IMR-90 (cell line): ENCODE measurements at regions of chr16 and their contacts with region 1.

Region 1: DNA sequence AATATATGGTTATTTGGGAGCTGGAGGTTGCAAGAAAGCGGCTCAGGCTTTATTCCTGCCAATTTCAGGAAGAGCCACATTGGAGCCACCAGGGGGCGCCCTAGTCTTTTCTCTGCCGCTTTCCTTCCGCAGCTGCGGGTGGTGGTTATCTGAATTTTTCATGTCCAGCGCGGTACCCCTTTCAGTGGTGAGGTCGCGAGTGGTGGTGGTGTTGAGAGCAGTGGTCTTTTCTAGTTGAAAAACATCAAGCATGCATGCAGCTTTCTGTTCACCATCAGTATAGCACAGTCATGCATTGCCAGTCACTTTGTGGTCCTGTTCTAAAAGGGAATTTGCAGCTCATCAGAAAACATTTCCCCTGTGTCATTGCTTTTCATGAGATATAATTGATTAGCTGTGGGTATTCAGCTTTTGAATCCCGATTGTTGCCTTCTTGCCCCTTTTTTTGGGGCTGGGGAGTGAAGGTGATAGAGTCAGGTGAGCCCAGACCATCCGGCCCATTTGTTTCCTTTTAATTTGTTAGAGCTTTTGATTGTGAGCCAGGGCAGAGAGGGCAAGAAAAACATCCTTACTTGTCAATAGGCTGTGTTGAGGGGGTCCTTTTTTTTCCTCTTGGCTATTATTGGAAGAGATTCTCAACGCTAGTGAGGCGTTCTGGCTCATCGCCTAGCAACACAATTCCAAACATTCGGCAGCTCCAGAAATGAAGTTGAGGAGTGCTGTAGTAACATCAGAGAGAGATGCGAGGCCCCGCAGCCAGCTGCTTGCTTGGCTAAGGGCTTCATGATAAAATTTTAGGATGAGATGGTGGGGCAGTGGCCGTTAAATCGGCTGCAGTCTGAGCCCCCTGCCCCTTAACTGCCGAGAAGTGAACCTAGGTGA is 119.0 kb downstream of the SNX29 start:
- DNase-seq: peak; percentile 62
- ATAC-seq: peak; percentile 28
- H3K4me3 ChIP-seq: no peak overlapping the region
- H3K27ac ChIP-seq: no peak overlapping the region
- H3K4me1 ChIP-seq: peaks cover 29% of the 10 kb centered on the region
- H3K27me3 ChIP-seq: no peaks in the 10 kb centered on the region
- CTCF ChIP-seq: peak; percentile 86
- POLR2A ChIP-seq: no peak
- RAD21 ChIP-seq: peak; percentile 86

Region 2: DNA sequence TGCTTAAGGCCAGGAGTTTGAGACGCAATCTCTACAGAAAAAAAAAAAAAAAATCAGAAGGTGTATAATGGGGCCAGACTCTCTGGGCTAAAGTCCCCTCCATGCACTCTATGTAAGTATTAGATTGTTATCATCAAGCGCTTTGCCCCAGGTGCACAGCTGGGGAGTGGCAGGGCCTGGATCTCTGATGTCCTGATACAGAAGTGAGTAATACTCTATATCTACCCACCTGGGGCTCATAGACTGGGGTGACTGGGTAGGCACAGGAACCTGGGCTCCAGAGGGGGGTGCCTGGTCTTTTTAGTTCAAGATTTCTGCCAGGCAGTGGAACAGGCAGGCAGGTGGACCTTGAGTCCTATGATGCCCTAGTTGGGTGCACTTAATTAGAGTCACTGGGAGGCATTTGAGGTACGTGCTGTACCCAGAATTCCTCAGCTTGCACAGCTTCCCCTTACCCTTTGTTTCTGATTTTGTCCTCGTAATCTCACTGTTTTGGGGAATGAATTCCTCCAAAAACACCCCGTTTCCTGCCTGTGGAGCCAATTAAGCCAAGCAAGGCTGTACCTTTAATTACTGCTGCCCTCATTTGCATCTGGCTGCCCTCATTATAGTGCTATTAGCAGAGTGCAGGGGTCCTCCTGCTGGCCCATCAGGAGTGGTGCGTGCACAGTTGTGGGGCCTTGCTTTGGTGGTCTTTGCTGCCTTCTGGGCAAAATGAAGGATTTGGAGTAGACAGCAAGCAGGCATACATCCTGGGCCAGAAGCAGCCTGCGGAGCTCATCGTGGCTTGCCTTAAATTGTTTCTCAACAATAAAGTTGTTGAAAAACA is 120.0 kb after region 1 on chr16:
- CTCF ChIA-PET with region 1: no interaction called
- POLR2A ChIA-PET with region 1: no interaction called
- dilution Hi-C with region 1: no loop called
- in situ Hi-C with region 1: no loop called
- intact Hi-C with region 1: loop called (anchors 1 kb)
- DNase-seq: no peak
- ATAC-seq: no peak
- H3K4me3 ChIP-seq: no peak overlapping the region
- H3K27ac ChIP-seq: no peak overlapping the region
- H3K4me1 ChIP-seq: no peaks in the 10 kb centered on the region
- H3K27me3 ChIP-seq: no peaks in the 10 kb centered on the region
- CTCF ChIP-seq: peak; percentile 38
- POLR2A ChIP-seq: no peak
- RAD21 ChIP-seq: peak; percentile 50

Region 3: DNA sequence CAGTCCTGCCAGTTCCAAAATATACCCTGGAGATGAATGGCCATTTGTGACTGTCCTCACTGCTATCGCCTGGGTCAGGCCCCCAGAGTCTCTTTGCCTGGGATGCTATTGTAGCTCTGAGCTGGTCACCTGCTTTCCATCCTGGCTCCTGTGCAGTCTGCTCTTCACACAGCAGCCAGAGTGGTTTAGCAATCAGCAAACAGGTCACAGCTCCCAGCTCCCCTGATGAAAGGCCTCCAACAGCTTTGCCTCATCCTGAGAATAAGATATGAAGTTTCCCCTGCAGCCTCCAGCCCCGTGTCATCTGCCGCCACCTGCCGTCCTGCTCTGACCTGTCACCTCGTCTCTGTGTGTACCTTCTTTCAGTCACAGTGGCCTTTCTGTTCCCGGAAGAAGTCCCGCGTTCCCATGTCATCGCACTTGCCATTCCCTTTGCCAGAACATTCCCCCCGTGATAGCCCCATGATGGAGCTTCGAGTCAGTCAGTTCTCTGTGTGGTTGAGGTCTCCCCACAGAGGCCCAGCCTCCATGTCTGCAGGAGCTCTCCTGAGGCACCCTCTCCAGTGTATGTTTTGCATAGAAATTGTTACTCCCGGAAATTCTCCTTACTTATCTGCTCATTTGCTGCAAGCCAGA is 162.5 kb after region 1 on chr16:
- CTCF ChIA-PET with region 1: interaction called, 12 read pairs
- POLR2A ChIA-PET with region 1: no interaction called
- dilution Hi-C with region 1: no loop called
- in situ Hi-C with region 1: loop called (anchors 10 kb)
- intact Hi-C with region 1: loop called (anchors 1 kb)
- DNase-seq: no peak
- ATAC-seq: no peak
- H3K4me3 ChIP-seq: no peak overlapping the region
- H3K27ac ChIP-seq: no peak overlapping the region
- H3K4me1 ChIP-seq: peaks cover 11% of the 10 kb centered on the region
- H3K27me3 ChIP-seq: no peaks in the 10 kb centered on the region
- CTCF ChIP-seq: 0 out of 2 replicates have a peak, but pooled peaks have one; percentile 6
- POLR2A ChIP-seq: no peak
- RAD21 ChIP-seq: no peak

Region 4: DNA sequence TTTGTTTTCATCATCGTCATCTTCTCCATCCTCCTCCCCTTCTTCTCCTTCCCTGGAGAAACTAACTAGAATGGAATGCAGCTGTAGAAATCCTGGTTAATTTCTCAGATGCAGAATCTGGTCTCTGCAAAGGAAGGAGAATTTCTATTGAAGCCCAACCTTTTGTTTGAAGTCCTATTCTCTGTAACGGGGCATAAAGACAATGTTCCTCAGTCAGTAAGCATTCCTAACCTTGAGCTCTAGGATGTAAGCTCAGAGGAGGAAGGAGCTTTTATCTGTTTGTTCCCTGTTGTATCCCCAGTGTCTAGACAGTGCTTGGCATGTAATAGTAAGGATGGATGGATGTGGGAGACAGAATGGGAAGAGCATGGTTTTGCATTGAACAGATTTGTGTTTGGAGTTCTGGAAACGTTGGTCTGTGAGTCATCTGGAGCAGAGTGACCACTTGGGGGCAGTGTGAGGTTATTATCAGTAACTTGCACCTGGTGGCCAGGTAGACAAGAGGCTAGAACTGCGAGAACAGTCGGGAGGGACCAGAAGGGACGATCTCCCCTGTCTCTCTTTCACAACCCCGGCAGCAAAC is 244.7 kb after region 1 on chr16:
- CTCF ChIA-PET with region 1: interaction called, 9 read pairs
- POLR2A ChIA-PET with region 1: interaction called, 3 read pairs
- dilution Hi-C with region 1: no loop called
- in situ Hi-C with region 1: no loop called
- intact Hi-C with region 1: loop called (anchors 2 kb)
- DNase-seq: peak; percentile 73
- ATAC-seq: peak; percentile 82
- H3K4me3 ChIP-seq: no peak overlapping the region
- H3K27ac ChIP-seq: no peak overlapping the region
- H3K4me1 ChIP-seq: peaks cover 15% of the 10 kb centered on the region
- H3K27me3 ChIP-seq: no peaks in the 10 kb centered on the region
- CTCF ChIP-seq: peak; percentile 48
- POLR2A ChIP-seq: no peak
- RAD21 ChIP-seq: no peak

Region 5: DNA sequence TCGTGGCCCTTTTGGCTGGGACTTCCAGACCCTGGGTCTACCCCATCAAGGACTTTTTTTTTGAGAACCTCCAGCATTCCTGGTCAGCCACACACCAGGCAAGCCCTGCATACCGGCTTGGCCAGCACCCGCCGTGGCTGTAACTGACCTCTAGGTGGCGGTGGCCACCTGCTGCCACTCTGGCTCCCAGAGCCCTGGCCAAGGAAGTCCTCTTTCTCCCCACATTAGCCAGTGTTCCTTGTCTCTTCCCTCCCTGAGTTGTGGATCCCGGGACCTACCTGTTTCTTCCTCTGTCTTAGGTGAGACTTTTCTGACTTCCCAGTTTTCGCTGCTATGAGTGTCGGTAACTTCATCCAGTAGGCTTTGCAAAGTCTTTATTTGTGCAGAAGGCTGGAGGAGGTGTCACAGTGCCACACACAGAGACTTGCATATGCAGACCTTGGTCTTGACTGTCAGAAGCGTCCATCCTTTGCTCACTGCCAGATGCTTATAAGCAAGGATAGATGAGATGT is 359.8 kb after region 1 on chr16:
- CTCF ChIA-PET with region 1: no interaction called
- POLR2A ChIA-PET with region 1: no interaction called
- dilution Hi-C with region 1: no loop called
- in situ Hi-C with region 1: no loop called
- intact Hi-C with region 1: loop called (anchors 10 kb)
- DNase-seq: peak; percentile 55
- ATAC-seq: peak; percentile 100
- H3K4me3 ChIP-seq: no peak overlapping the region
- H3K27ac ChIP-seq: no peak overlapping the region
- H3K4me1 ChIP-seq: no peaks in the 10 kb centered on the region
- H3K27me3 ChIP-seq: no peaks in the 10 kb centered on the region
- CTCF ChIP-seq: peak; percentile 89
- POLR2A ChIP-seq: no peak
- RAD21 ChIP-seq: peak; percentile 94

Region 6: DNA sequence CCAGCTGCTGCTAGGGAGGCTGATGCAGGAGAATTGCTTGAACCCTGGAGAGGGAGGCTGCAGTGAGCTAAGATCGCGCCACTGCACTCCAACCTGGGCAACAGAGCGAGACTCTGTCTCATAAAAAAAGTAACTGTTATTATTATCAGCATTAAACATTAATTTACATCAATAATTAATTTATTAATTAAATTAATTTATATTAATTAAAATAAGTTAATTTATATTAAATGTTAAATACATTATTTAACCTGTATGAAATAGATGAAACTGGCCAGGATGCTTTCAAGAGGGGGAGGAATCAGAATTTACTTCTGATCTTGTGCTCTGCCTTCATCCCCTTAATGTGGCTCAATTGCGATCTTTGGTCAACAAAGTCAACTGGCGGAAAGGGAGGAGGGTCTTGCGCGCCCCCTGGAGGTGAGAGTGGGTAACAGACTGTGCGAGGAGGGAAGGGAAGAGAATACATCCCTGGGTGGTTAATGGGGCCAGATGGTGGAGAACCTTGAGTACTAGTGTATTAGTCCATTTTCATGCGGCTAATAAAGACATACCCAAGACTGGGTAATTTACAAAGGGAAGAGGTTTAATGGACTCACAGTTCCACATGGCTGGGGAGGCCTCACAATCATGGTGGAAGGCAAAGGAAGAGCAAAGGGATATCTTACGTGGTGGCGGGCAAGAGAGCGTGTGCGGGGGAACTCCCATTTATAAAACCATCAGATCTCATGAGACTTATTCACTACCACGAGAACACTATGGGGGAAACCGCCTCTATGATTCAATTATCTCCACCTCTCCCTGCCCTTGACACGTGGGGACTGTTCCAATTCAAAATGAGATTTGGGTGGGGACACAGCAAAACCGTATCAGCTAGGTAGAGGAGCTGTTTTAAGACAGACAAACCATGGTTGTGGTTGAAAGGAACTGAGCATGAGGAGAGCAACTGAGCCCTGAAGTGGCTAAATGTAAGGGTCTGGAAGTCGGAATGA is 723.9 kb after region 1 on chr16:
- CTCF ChIA-PET with region 1: interaction called, 5 read pairs
- POLR2A ChIA-PET with region 1: no interaction called
- dilution Hi-C with region 1: no loop called
- in situ Hi-C with region 1: loop called (anchors 10 kb)
- intact Hi-C with region 1: no loop called
- DNase-seq: peak; percentile 36
- ATAC-seq: peak; percentile 81
- H3K4me3 ChIP-seq: no peak overlapping the region
- H3K27ac ChIP-seq: no peak overlapping the region
- H3K4me1 ChIP-seq: no peaks in the 10 kb centered on the region
- H3K27me3 ChIP-seq: no peaks in the 10 kb centered on the region
- CTCF ChIP-seq: peak; percentile 81
- POLR2A ChIP-seq: no peak
- RAD21 ChIP-seq: peak; percentile 86